Mammary epithelial cell (primary cell): ENCODE measurements at regions of chr7 and their contacts with region 1.

Region 1: GRCh38 chr7:106056513-106057203 is 55.5 kb downstream of the SYPL1 start:
- DNase-seq: peak; percentile 53
- H3K4me3 ChIP-seq: no peak overlapping the region
- H3K27ac ChIP-seq: no peak overlapping the region
- H3K4me1 ChIP-seq: peaks cover 39% of the 10 kb centered on the region
- H3K27me3 ChIP-seq: no peaks in the 10 kb centered on the region
- CTCF ChIP-seq: peak; percentile 81 to 93

Region 2: DNA sequence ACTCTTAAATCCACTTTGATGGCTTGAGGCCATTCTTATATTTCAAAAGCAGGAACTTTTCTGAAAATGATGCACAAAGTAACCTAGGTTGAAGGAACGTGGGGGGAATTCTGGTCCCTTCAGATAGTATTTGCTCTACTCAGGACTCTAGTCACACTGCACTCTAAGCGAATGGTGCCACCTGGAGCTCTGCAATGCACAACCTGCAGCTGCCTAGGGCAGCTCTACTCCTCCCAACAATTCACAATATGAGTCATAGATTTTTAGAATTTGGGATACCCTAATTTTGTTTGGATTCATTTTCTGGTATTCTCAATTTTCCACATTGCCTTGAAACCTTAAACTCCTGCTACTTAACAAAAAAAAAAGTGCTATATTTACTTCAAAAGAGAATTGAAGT is 38.1 kb after region 1 on chr7:
- CTCF ChIA-PET with region 1: no interaction called
- dilution Hi-C with region 1: no loop called
- in situ Hi-C with region 1: no loop called
- intact Hi-C with region 1: loop called (anchors 1 kb)
- DNase-seq: no peak
- H3K4me3 ChIP-seq: no peak overlapping the region
- H3K27ac ChIP-seq: no peak overlapping the region
- H3K4me1 ChIP-seq: no peaks in the 10 kb centered on the region
- H3K27me3 ChIP-seq: no peaks in the 10 kb centered on the region
- CTCF ChIP-seq: peak in 1 of 2 donors; percentile 53

Region 3: GRCh38 chr7:106112117-106112971 is 55.7 kb after region 1 on chr7 and contains the start of gene SYPL1:
- CTCF ChIA-PET with region 1: no interaction called
- dilution Hi-C with region 1: no loop called
- in situ Hi-C with region 1: no loop called
- intact Hi-C with region 1: loop called (anchors 1 kb)
- DNase-seq: peak; percentile 90
- H3K4me3 ChIP-seq: peak within 1 kb of the TSS; percentile 87 to 98 (median 90)
- H3K27ac ChIP-seq: peak within 1 kb of the TSS; percentile 94
- H3K4me1 ChIP-seq: peaks cover 18% of the 10 kb centered on the region
- H3K27me3 ChIP-seq: no peaks in the 10 kb centered on the region
- CTCF ChIP-seq: no peak
- total RNA-seq, gene SYPL1: 74.3 to 124 TPM

Region 4: GRCh38 chr7:106166655-106167342 is 110.1 kb after region 1 on chr7:
- CTCF ChIA-PET with region 1: no interaction called
- dilution Hi-C with region 1: loop called (anchors 5 kb)
- in situ Hi-C with region 1: no loop called
- intact Hi-C with region 1: loop called (anchors 1 kb)
- DNase-seq: peak; percentile 40
- H3K4me3 ChIP-seq: no peak overlapping the region
- H3K27ac ChIP-seq: no peak overlapping the region
- H3K4me1 ChIP-seq: no peaks in the 10 kb centered on the region
- H3K27me3 ChIP-seq: no peaks in the 10 kb centered on the region
- CTCF ChIP-seq: peak; percentile 76 to 82